ENCODE measurements at regions of chr7 and their contacts with region 1.

Region 1: GRCh38 chr7:20598459-20599309 is 16.8 kb upstream of the ABCB5 start:
- DNase-seq: peak in 1 of 2 experiments; percentile 73
- H3K4me3 ChIP-seq: no peak overlapping the region
- H3K4me1 ChIP-seq: no peaks in the 10 kb centered on the region
- H3K27me3 ChIP-seq: no peaks in the 10 kb centered on the region

Region 2: DNA sequence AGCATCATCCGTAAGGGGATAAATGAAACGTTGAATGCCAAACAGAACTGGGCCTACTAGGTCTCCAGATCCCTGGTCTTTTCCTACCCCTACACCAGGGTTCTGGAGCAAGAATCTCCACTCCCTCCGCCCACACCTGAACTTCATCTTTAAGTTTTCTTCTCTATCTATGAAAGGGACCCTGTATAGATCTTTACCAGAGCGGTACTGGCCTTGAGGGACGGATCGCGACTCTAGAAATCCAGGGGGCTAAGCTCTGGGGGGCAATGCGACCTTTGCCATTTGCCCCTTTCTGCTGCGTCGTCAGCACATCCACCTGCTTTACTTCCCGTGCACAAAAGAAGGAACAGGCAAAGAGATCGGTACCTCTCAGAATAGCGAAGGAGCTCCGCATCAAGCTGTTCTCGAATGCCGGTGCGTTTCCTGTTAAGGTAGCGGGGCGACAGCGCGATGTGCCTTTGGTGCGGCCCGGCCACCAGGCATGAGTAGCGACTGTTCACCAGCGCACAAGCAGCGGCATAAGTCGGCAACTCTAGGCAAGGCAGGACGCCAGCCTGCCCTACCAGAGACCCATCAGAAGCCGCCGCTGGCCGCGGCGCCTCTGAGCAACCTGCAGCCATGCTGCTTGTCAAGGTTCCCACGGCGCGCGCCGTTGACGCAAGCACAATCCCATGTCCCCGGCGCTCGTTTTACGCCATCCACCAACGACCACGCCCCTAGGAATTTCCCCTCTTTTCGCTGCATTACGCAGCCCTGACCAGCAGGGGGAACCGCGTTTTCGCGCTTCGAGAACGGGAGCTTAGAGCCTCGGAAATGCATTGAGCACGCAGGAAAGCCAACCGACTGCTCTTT is 890.1 kb before region 1 on chr7 and contains the start of gene POLR1F:
- in situ Hi-C with region 1: loop called (anchors 25 kb)
- DNase-seq: peak; percentile 88 to 92
- H3K4me3 ChIP-seq: peak within 1 kb of the TSS; percentile 92
- H3K4me1 ChIP-seq: peaks cover 18% of the 10 kb centered on the region
- H3K27me3 ChIP-seq: peaks cover 6% of the 10 kb centered on the region; the same call in 1 of the 2 replicates

Region 3: GRCh38 chr7:19982841-19983835 is 615.5 kb before region 1 on chr7:
- in situ Hi-C with region 1: loop called (anchors 25 kb)
- DNase-seq: peak; percentile 27 to 70
- H3K4me3 ChIP-seq: no peak overlapping the region
- H3K4me1 ChIP-seq: no peaks in the 10 kb centered on the region
- H3K27me3 ChIP-seq: no peaks in the 10 kb centered on the region

Region 4: GRCh38 chr7:20804345-20804744 is 205.7 kb after region 1 on chr7:
- in situ Hi-C with region 1: no loop called
- DNase-seq: no peak
- H3K4me3 ChIP-seq: no peak overlapping the region
- H3K4me1 ChIP-seq: peaks cover 16% of the 10 kb centered on the region
- H3K27me3 ChIP-seq: no peaks in the 10 kb centered on the region

Region 5: GRCh38 chr7:21184937-21185651 is 586.4 kb after region 1 on chr7:
- in situ Hi-C with region 1: no loop called
- DNase-seq: peak; percentile 41 to 94
- H3K4me3 ChIP-seq: no peak overlapping the region
- H3K4me1 ChIP-seq: peaks cover 20% of the 10 kb centered on the region
- H3K27me3 ChIP-seq: 0 out of 2 replicates have a peak, but pooled peaks cover 2% of the 10 kb centered on the region

Region 6: GRCh38 chr7:21300692-21301091 is 702.0 kb after region 1 on chr7:
- in situ Hi-C with region 1: no loop called
- DNase-seq: peak in 1 of 2 experiments; percentile 31
- H3K4me3 ChIP-seq: no peak overlapping the region
- H3K4me1 ChIP-seq: peaks cover 29% of the 10 kb centered on the region
- H3K27me3 ChIP-seq: no peaks in the 10 kb centered on the region

Measured in HAP-1 (cell line).